Esophagus muscularis mucosa (tissue), 4 donors: ENCODE measurements at regions of chr12 and their contacts with region 1.

Region 1: GRCh38 chr12:121579981-121580868 is 598 bp downstream of the KDM2B start:
- DNase-seq: peak; percentile 96
- H3K4me3 ChIP-seq: peak overlapping the region; percentile 65 to 90 (median 82)
- H3K27ac ChIP-seq: peak overlapping the region; percentile 84 to 93 (median 90)
- H3K4me1 ChIP-seq: peaks cover 44 to 66% (median 58%) of the 10 kb centered on the region in 4 donors
- H3K27me3 ChIP-seq: no peaks in the 10 kb centered on the region
- CTCF ChIP-seq: no peak
- EP300 ChIP-seq: no peak
- POLR2A ChIP-seq: no peak

Region 2: DNA sequence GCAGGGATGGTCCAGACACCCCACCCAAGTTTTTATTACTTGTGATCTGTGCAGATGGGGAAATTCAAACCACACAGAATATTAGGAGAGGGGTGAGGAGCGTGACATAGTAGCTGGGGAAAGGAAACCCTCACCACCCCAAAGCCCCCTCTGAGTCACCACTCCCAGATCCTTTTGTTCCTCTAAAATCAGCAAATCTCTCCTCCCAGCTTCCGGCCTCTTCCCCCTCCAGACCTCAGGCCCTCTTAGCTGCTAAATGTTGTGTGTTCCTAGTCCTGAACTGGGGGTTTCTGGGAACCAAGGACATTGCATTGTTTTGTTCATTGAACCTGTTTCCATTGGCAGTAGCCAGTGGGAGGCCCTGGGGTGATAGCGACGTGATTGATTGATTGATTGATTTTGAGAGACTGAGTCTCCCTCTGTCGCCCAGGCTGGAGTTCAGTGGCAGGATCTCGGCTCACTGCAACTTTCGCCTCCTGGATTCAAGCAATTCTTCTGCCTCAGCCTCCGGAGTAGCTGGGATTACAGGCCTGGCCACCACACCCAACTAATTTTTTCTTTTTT is 40.2 kb after region 1 on chr12:
- intact Hi-C with region 1: loop called (anchors 5 kb)
- DNase-seq: no peak
- H3K4me3 ChIP-seq: no peak overlapping the region
- H3K27ac ChIP-seq: peak overlapping the region in 3 of 4 donors; percentile 25 to 51 (median 45)
- H3K4me1 ChIP-seq: peaks cover 6 to 16% (median 12%) of the 10 kb centered on the region in 4 donors
- H3K27me3 ChIP-seq: no peaks in the 10 kb centered on the region
- CTCF ChIP-seq: no peak
- EP300 ChIP-seq: no peak
- POLR2A ChIP-seq: no peak